ENCODE measurements at regions of chr1 and their contacts with region 1.

Region 1: DNA sequence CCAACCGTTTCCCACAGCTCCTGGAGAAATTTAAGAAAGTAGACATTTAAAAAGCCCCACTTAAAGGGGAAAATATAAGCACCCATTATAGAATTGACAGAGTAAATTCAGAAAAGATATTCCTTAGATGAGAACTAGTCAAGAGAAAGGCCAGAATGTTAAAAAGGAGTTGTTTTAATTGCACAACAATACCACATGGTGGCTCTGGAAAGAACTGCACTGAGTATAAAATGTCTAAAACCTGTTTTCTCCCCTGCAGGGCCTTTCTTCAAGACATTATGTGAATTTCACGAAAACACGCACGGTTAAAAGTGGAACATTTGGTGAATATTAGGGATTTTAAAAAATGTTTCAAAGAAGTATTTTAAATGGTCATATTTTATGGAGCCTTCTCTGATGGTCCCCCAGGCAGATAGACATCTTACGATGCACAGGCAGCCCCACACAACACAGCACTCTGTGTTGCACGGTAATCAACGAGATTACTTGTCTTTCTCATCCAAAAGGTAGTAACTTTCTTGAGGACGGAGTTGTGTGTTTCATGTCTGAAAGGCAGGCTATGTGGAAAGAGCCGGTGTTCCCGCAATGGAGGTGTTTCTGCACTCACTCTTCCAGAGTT is 101.9 kb downstream of the PRRX1 start:
- DNase-seq: no peak
- ATAC-seq: peak; percentile 80 to 87
- H3K4me3 ChIP-seq: no peak overlapping the region
- H3K27ac ChIP-seq: peak overlapping the region in 2 of 4 donors; percentile 10 to 27
- H3K4me1 ChIP-seq: no peaks in the 10 kb centered on the region
- H3K27me3 ChIP-seq: no peaks in the 10 kb centered on the region
- CTCF ChIP-seq: peak; percentile 53 to 71 (median 57)
- POLR2A ChIP-seq: no peak

Region 2: DNA sequence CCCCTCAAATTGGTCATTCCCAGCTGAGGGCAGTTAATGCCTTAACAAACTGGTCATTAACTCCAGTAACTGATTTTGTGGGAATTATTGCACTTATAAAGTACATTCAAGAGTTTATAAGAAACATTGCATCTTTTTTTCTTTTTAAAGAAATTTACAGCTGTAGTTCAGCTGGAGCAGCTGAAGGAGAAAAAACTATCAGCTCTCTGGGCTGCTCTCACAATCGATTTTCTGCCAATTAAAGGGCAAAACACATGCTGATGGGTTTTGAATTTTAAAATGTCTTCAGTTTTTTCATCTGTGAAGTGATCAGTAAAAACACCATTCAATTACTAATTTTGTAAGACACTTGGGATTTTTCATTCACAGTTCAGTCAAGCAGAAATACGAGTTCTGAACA is 766.1 kb before region 1 on chr1:
- in situ Hi-C with region 1: no loop called
- intact Hi-C with region 1: loop called (anchors 10 kb)
- DNase-seq: no peak
- ATAC-seq: no peak
- H3K4me3 ChIP-seq: no peak overlapping the region
- H3K27ac ChIP-seq: no peak overlapping the region
- H3K4me1 ChIP-seq: no peaks in the 10 kb centered on the region
- H3K27me3 ChIP-seq: no peaks in the 10 kb centered on the region
- CTCF ChIP-seq: no peak
- POLR2A ChIP-seq: no peak

Region 3: DNA sequence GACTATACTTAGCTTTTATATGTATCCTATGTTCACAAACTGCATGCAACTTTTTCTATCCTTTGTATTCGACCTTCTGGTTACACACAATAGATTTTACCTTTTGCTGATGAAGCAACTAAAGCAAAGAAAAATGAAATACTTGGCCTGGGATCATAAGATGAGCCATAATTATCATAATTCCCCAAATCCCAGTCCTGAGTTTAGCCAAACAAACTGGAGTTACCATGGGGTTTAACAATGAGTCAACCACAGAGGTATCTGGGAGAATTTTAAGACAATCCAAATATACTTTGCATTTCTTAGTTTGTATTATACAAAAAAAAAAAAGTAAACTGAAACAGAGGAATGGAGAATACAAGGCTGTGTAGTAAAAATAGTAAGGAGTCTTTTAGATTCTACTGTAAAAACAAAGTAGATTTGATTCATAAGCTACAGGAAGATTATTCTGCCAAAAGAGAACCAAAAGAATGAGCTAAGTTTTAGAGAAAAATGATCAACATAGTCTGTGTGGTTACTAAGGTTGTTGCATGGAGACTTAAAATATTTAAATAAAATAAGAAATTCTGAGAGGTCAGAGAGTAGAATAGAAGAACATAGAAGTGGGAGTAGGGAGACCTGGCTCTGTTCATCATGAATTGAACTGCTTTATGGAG is 294.3 kb before region 1 on chr1:
- in situ Hi-C with region 1: no loop called
- intact Hi-C with region 1: no loop called
- DNase-seq: no peak
- ATAC-seq: no peak
- H3K4me3 ChIP-seq: no peak overlapping the region
- H3K27ac ChIP-seq: no peak overlapping the region
- H3K4me1 ChIP-seq: no peaks in the 10 kb centered on the region
- H3K27me3 ChIP-seq: no peaks in the 10 kb centered on the region
- CTCF ChIP-seq: no peak
- POLR2A ChIP-seq: no peak

Region 4: GRCh38 chr1:170623171-170623570 is 142.7 kb before region 1 on chr1:
- in situ Hi-C with region 1: no loop called
- intact Hi-C with region 1: no loop called
- DNase-seq: no peak
- ATAC-seq: no peak
- H3K4me3 ChIP-seq: no peak overlapping the region
- H3K27ac ChIP-seq: no peak overlapping the region
- H3K4me1 ChIP-seq: peaks cover 16 to 23% of the 10 kb centered on the region in 2 donors
- H3K27me3 ChIP-seq: no peaks in the 10 kb centered on the region
- CTCF ChIP-seq: no peak
- POLR2A ChIP-seq: no peak

Region 5: GRCh38 chr1:170670802-170671628 is 94.8 kb before region 1 on chr1:
- in situ Hi-C with region 1: loop called in 2 of 4 experiments (anchors 10 to 25 kb)
- intact Hi-C with region 1: loop called (anchors 1 kb)
- DNase-seq: peak in 1 of 2 donors; percentile 58
- ATAC-seq: peak in 1 of 2 donors; percentile 8
- H3K4me3 ChIP-seq: peak overlapping the region; percentile 7 to 27 (median 16)
- H3K27ac ChIP-seq: peak overlapping the region; percentile 90 to 100 (median 96)
- H3K4me1 ChIP-seq: peaks cover 65 to 68% of the 10 kb centered on the region in 2 donors
- H3K27me3 ChIP-seq: no peaks in the 10 kb centered on the region
- CTCF ChIP-seq: peak; percentile 30 to 70 (median 61)
- POLR2A ChIP-seq: no peak

Region 6: DNA sequence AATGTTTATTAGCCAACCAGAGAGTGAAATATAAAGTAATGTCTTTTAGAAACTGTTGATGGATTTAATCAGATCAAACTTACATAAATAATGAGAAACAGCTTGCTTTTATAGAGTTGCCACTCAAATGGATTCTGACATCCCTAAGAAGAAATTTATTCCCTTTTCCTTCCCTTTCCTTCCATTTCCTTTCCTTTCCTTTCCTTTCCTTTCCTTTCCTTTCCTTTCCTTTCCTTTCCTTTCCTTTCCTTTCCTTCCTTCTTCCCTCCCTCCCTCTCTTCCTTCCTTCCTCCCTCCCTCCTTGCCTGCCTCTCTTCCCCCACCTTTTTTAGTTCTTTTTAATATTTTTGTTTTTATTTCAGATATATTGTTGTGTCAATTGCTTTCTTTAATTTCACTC is 74.6 kb before region 1 on chr1:
- in situ Hi-C with region 1: no loop called
- intact Hi-C with region 1: loop called (anchors 2 kb)
- DNase-seq: no peak
- ATAC-seq: no peak
- H3K4me3 ChIP-seq: no peak overlapping the region
- H3K27ac ChIP-seq: peak overlapping the region; percentile 73 to 95 (median 86)
- H3K4me1 ChIP-seq: peaks cover 67 to 78% of the 10 kb centered on the region in 2 donors
- H3K27me3 ChIP-seq: no peaks in the 10 kb centered on the region
- CTCF ChIP-seq: no peak
- POLR2A ChIP-seq: no peak

Region 7: GRCh38 chr1:170790175-170790574 is 24.4 kb after region 1 on chr1:
- in situ Hi-C with region 1: no loop called
- intact Hi-C with region 1: no loop called
- DNase-seq: no peak
- ATAC-seq: no peak
- H3K4me3 ChIP-seq: no peak overlapping the region
- H3K27ac ChIP-seq: no peak overlapping the region
- H3K4me1 ChIP-seq: peaks cover 3 to 4% of the 10 kb centered on the region in 2 donors
- H3K27me3 ChIP-seq: no peaks in the 10 kb centered on the region
- CTCF ChIP-seq: no peak
- POLR2A ChIP-seq: no peak